ENCODE measurements at regions of chr1 and their contacts with region 1.

Region 1: GRCh38 chr1:229270547-229271447 is at the start of gene RAB4A:
- DNase-seq: peak; percentile 96
- H3K4me3 Mint-ChIP-seq: peak within 1 kb of the TSS; percentile 80
- H3K27ac Mint-ChIP-seq: peak within 1 kb of the TSS; percentile 77
- H3K4me1 Mint-ChIP-seq: peaks cover 48% of the 10 kb centered on the region
- H3K27me3 Mint-ChIP-seq: no peaks in the 10 kb centered on the region
- CTCF ChIP-seq: no peak
- total RNA-seq, gene RAB4A: 87.4 and 88.6 TPM in 2 replicates

Region 2: GRCh38 chr1:229238674-229239415 is 32.0 kb before region 1 on chr1:
- CTCF ChIA-PET with region 1: no interaction called
- POLR2A ChIA-PET with region 1: interaction called, 23 read pairs
- intact Hi-C with region 1: no loop called
- DNase-seq: peak; percentile 78
- H3K4me3 Mint-ChIP-seq: no peak overlapping the region
- H3K27ac Mint-ChIP-seq: peak overlapping the region; percentile 92
- H3K4me1 Mint-ChIP-seq: peaks cover 20% of the 10 kb centered on the region
- H3K27me3 Mint-ChIP-seq: no peaks in the 10 kb centered on the region
- CTCF ChIP-seq: no peak

Region 3: GRCh38 chr1:229280921-229281320 is 10.1 kb after region 1 on chr1:
- CTCF ChIA-PET with region 1: interaction called, 4 read pairs
- POLR2A ChIA-PET with region 1: interaction called, 52 read pairs
- intact Hi-C with region 1: no loop called
- DNase-seq: peak; percentile 43
- H3K4me3 Mint-ChIP-seq: no peak overlapping the region
- H3K27ac Mint-ChIP-seq: no peak overlapping the region
- H3K4me1 Mint-ChIP-seq: peaks cover 32% of the 10 kb centered on the region
- H3K27me3 Mint-ChIP-seq: no peaks in the 10 kb centered on the region
- CTCF ChIP-seq: no peak

Region 4: GRCh38 chr1:229287267-229287666 is 16.5 kb after region 1 on chr1:
- CTCF ChIA-PET with region 1: interaction called, 6 read pairs
- POLR2A ChIA-PET with region 1: interaction called, 52 read pairs
- intact Hi-C with region 1: no loop called
- DNase-seq: peak; percentile 58
- H3K4me3 Mint-ChIP-seq: no peak overlapping the region
- H3K27ac Mint-ChIP-seq: no peak overlapping the region
- H3K4me1 Mint-ChIP-seq: peaks cover 32% of the 10 kb centered on the region
- H3K27me3 Mint-ChIP-seq: no peaks in the 10 kb centered on the region
- CTCF ChIP-seq: no peak

Region 5: DNA sequence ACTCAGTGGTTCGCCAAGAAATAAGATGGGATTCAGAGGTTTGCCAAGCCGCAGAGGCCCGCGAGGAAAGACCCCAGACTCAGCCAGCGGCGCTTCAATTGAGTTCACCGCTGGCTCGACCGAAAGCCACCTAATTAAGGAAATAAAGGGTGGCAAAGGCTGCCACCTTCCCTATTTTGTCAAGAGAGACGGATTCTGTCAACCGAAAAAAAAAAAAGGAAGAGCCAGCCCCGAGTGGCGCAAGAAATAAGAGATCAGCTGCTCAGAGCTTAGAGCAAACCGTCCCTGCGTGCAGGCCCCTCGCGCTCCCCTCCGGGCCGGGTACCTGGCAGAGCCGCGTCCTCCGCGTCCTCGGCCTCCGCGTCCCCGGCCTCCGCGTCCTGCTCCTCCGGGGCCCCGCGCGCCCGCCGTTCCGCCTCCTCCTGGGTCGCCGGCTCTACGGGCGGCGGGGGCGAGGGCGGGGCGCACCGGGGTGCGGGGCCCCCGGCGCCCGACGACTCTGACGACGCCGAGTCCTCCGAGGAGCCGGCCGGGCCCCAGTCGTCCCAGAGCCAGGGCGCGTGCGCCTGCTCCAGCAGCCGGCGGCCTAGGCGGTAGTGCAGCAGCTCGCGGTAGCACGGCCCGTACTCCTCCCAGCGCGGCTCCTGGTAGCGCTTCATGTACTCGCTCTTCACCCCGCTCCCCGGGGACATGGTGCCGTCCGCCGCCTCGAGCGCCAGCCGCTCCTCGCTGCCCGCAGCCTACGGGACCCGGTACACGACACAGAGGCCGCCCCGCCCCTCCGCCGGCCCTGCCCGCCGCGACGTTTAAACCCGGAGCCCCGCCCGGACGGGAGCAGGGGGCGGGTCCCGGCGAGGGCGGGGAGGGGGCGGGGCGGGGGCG is 71.2 kb after region 1 on chr1:
- CTCF ChIA-PET with region 1: interaction called, 3 read pairs
- POLR2A ChIA-PET with region 1: interaction called, 56 read pairs
- intact Hi-C with region 1: loop called (anchors 5 kb)
- DNase-seq: peak; percentile 93
- H3K4me3 Mint-ChIP-seq: peak overlapping the region; percentile 89
- H3K27ac Mint-ChIP-seq: peak overlapping the region; percentile 80
- H3K4me1 Mint-ChIP-seq: peaks cover 38% of the 10 kb centered on the region
- H3K27me3 Mint-ChIP-seq: peaks cover 21% of the 10 kb centered on the region
- CTCF ChIP-seq: no peak

Region 6: DNA sequence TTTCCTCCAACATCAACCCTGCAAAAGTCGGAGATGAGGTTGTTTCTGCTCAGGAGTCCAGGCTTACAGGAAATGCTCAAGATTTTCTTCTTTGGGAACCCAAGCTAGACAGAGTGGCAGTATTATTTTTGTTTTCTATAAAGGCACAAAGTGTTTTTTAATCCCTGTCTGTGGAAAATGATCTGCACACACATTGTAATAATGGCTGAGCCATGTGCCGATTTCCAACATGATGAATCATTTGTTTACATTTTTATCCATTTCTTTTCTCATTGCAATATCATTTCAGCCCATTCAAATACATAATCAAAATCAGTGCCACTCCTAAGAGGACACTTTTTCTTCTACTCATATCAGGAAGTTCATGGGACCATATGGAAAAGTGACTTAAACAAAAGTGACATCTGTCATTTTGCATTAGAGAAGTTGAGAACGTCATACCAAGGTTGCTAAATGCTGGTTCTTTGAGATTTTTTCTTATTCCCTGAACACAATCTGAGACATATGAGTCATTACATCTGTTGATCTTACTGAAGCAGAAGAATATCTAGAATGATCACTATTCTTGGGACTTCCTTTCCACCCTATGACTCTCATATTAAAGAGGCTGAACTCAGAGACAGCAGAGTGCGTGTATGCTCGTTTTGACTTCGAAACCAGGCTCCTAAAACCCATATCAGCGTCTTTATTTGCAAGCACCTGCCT is 118.2 kb after region 1 on chr1:
- CTCF ChIA-PET with region 1: no interaction called
- POLR2A ChIA-PET with region 1: interaction called, 4 read pairs
- intact Hi-C with region 1: loop called (anchors 1 kb)
- DNase-seq: peak; percentile 64
- H3K4me3 Mint-ChIP-seq: peak overlapping the region; percentile 10
- H3K27ac Mint-ChIP-seq: peak overlapping the region; percentile 40
- H3K4me1 Mint-ChIP-seq: peaks cover 14% of the 10 kb centered on the region
- H3K27me3 Mint-ChIP-seq: no peaks in the 10 kb centered on the region
- CTCF ChIP-seq: no peak

Region 7: DNA sequence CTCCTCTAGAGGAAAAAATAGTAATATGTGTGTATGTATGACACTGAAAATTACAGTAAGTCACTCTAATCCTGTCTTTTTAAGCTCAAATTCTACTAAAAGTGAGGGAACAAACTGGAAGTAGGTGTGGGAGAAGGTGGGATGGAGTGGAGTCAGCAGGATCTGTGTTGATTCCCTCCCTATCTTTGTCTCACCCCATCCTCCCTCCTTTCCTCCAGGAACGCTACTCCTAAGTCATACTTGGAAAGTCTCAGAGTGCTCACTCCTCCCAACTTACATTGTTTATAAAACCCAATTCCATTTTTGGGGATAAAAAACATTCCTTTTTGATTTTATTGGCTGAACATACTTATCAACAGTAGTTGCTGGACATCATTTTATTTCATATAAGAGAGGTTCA is 252.3 kb after region 1 on chr1:
- CTCF ChIA-PET with region 1: no interaction called
- POLR2A ChIA-PET with region 1: no interaction called
- intact Hi-C with region 1: no loop called
- DNase-seq: no peak
- H3K4me3 Mint-ChIP-seq: no peak overlapping the region
- H3K27ac Mint-ChIP-seq: peak overlapping the region; percentile 7
- H3K4me1 Mint-ChIP-seq: no peaks in the 10 kb centered on the region
- H3K27me3 Mint-ChIP-seq: no peaks in the 10 kb centered on the region
- CTCF ChIP-seq: no peak

Measured in MCF 10A (cell line).